Right ventricle myocardium superior (tissue), 1 donor: ENCODE measurements at regions of chr17 and their contacts with region 1.

Region 1: DNA sequence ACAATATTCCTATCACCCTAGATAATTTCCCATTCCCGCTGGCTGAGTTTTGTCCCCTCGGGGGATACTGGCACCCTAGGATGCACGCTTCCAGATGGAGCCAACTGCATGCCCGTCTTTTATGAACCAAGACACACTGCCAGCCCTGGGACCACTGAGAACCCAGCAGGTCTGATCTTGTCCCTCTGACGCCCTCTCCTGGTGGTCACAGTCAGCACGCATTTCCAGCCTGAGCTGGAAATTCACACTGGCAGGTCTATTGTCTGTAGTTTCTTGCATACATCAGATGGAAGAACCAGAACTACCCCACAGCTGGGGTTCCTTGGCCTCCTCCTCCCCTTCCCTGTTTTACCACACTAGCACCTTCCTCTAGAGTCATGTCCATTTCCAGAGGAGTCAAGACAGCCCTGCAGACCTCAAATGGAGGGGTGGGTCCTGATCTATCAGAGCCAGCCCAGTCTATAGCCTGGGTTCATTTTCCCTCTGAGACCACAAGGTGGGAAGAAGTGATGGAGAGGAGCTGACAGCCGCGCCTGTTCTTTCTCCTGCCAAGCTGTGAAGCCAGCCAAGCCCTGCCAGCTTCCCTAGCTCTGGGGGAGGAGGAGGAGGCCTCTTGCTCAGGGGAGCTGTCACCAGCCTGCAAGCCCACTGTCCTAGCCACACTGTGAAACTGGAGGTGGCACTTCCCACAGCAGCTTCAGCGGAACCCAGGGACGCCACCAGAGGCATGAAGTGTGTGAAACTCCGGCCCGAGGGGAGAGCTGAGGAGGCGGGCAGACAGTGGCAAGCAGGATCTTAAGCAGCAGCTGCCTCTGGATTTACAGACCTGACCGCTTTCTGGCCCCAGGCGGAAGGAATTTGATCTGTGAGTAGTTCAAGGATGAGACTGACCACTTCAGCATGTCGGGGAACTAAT is 29.3 kb downstream of the MXRA7 start:
- DNase-seq: peak; percentile 77
- ATAC-seq: peak; percentile 72

Region 2: DNA sequence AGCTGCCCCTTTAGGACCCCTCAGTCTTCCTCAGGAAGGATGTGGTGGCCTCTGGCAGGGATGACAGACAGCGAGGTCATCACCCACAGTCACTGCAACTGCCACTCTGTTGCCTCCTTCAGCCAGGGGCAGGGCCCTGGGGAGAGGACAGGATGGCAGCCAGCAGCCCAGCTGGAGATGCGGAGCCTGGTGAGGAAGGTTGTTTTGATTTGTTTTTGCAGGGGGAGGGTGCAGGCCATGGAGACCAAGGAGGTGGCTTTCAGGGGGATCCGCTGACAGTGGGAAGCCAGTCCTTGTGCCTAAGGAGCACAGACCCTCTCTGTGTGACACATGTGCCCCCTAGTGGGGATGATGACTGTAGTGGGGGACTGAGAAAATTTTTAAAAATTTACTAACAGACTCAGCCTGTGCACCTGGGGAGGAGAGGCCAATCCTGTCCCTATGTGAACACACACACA is 134.3 kb before region 1 on chr17:
- intact Hi-C with region 1: no loop called
- DNase-seq: no peak
- ATAC-seq: peak; percentile 50

Region 3: GRCh38 chr17:76714822-76715495 is 33.5 kb after region 1 on chr17:
- intact Hi-C with region 1: loop called (anchors 5 kb)
- DNase-seq: peak; percentile 83
- ATAC-seq: peak; percentile 16

Region 4: GRCh38 chr17:76737082-76737675 is 55.7 kb after region 1 on chr17 and contains the start of gene SRSF2:
- intact Hi-C with region 1: no loop called
- DNase-seq: peak; percentile 99
- ATAC-seq: peak; percentile 90
- total RNA-seq, gene SRSF2: 61.2 TPM